ENCODE measurements at regions of chr10 and their contacts with region 1.

Region 1: GRCh38 chr10:73940634-73941221 is 29.8 kb downstream of the PLAU start:
- DNase-seq: peak; percentile 78 to 85 (median 79)
- H3K4me3 ChIP-seq: no peak overlapping the region
- H3K4me3 Mint-ChIP-seq: peak overlapping the region in 7 of 8 donors; percentile 49 to 79 (median 66)
- H3K27ac ChIP-seq: no peak overlapping the region
- H3K27ac Mint-ChIP-seq: peak overlapping the region in 5 of 7 donors; percentile 37 to 82 (median 74)
- H3K4me1 ChIP-seq: peaks cover 10% of the 10 kb centered on the region
- H3K4me1 Mint-ChIP-seq: peaks cover 6 to 9% (median 8%) of the 10 kb centered on the region in 4 donors
- H3K27me3 ChIP-seq: no peaks in the 10 kb centered on the region
- H3K27me3 Mint-ChIP-seq: peaks cover 0 to 2% of the 10 kb centered on the region in 2 donors

Region 2: DNA sequence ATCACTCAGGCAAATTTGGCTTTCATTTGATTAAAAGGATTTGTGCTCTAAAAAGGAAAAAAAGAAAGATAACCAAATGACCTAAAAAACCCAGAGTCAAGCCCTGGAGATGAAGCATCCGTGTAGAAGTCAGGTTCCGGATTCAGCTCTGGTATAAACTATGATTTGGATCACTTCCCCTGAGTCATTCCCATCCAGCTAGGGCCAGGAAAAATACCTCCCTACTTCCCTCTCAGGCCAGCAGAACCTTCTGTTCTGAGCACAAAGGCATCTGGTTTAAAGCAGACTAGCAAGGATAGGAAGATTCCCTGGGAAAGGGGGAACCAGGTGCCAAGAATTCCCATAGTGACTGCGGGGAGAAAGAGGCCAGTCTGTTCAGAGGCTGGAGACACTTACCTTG is 103.7 kb before region 1 on chr10:
- CTCF ChIA-PET with region 1: interaction called, 10 read pairs
- POLR2A ChIA-PET with region 1: no interaction called
- intact Hi-C with region 1: no loop called
- DNase-seq: no peak
- H3K4me3 ChIP-seq: no peak overlapping the region
- H3K4me3 Mint-ChIP-seq: no peak overlapping the region
- H3K27ac ChIP-seq: no peak overlapping the region
- H3K27ac Mint-ChIP-seq: peak overlapping the region in 3 of 7 donors; percentile 4 to 42 (median 42)
- H3K4me1 ChIP-seq: no peaks in the 10 kb centered on the region
- H3K4me1 Mint-ChIP-seq: no peaks in the 10 kb centered on the region
- H3K27me3 ChIP-seq: no peaks in the 10 kb centered on the region
- H3K27me3 Mint-ChIP-seq: no peaks in the 10 kb centered on the region

Region 3: GRCh38 chr10:73865459-73866442 is 75.0 kb before region 1 on chr10:
- CTCF ChIA-PET with region 1: interaction called, 12 read pairs
- POLR2A ChIA-PET with region 1: no interaction called
- intact Hi-C with region 1: no loop called
- DNase-seq: peak; percentile 31 to 61 (median 44)
- H3K4me3 ChIP-seq: peak overlapping the region; percentile 56 to 65
- H3K4me3 Mint-ChIP-seq: peak overlapping the region; percentile 84 to 93 (median 86)
- H3K27ac ChIP-seq: peak overlapping the region; percentile 64
- H3K27ac Mint-ChIP-seq: peak overlapping the region; percentile 88 to 98 (median 94)
- H3K4me1 ChIP-seq: peaks cover 87% of the 10 kb centered on the region
- H3K4me1 Mint-ChIP-seq: peaks cover 47 to 97% (median 81%) of the 10 kb centered on the region in 4 donors
- H3K27me3 ChIP-seq: no peaks in the 10 kb centered on the region
- H3K27me3 Mint-ChIP-seq: no peaks in the 10 kb centered on the region

Region 4: DNA sequence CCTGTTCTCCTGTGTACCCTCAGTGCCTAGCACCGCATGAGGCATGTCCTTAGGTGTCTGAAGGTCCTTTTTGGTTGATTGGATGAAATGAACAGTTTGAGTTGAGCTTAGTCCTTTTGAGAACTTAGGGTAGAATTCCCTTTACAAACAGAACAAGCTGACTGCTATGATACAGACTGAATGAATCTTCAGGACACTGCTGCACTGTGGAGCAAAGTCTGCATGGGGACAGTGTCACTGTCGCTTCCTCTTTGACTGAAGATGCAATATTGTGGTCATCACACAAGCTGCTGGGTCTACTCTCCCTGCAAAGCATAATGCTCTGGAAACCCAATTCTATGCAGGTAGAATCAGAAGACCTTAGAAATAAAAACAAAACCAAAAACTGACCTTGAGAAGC is 38.4 kb before region 1 on chr10:
- CTCF ChIA-PET with region 1: interaction called, 20 read pairs
- POLR2A ChIA-PET with region 1: no interaction called
- intact Hi-C with region 1: no loop called
- DNase-seq: no peak
- H3K4me3 ChIP-seq: no peak overlapping the region
- H3K4me3 Mint-ChIP-seq: no peak overlapping the region
- H3K27ac ChIP-seq: no peak overlapping the region
- H3K27ac Mint-ChIP-seq: no peak overlapping the region
- H3K4me1 ChIP-seq: no peaks in the 10 kb centered on the region
- H3K4me1 Mint-ChIP-seq: no peaks in the 10 kb centered on the region
- H3K27me3 ChIP-seq: no peaks in the 10 kb centered on the region
- H3K27me3 Mint-ChIP-seq: peaks cover 12 to 13% of the 10 kb centered on the region in 2 donors

Region 5: DNA sequence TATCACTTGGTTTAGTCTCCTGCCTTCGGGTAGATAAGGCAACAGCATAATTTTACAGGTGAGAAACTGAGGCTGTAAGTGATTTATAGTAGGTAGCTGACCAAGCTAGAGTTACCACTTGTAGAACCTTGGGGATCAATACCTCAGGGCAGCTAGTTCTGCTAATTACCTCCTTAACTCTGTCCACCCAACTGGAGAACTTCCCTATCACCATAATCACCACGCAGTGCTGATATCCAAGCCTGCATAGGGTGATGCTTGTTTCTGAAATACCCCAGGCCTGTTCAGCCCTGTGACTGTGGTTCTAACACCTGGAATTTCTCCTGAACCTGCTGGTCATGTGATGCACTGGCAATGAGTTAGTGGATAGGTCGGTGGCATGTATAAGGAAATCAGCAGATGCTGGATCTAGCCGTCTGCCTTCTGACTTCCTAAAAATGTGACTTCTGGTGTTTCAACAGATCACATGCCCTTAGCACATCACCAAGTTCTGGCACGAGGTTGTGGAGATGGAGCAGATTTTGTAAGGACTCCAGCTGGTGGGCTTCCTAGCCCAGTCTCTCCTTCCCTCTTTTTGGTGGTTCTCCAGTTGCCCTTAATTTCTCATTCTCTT is 14.5 kb before region 1 on chr10:
- CTCF ChIA-PET with region 1: interaction called, 39 read pairs
- POLR2A ChIA-PET with region 1: no interaction called
- intact Hi-C with region 1: no loop called
- DNase-seq: no peak
- H3K4me3 ChIP-seq: no peak overlapping the region
- H3K4me3 Mint-ChIP-seq: no peak overlapping the region
- H3K27ac ChIP-seq: no peak overlapping the region
- H3K27ac Mint-ChIP-seq: no peak overlapping the region
- H3K4me1 ChIP-seq: peaks cover 19% of the 10 kb centered on the region
- H3K4me1 Mint-ChIP-seq: peaks cover 13 to 28% (median 15%) of the 10 kb centered on the region in 4 donors
- H3K27me3 ChIP-seq: no peaks in the 10 kb centered on the region
- H3K27me3 Mint-ChIP-seq: peaks cover 4 to 17% of the 10 kb centered on the region in 2 donors

Region 6: GRCh38 chr10:73991884-73992245 is 51.1 kb after region 1 on chr10:
- CTCF ChIA-PET with region 1: interaction called, 17 read pairs
- POLR2A ChIA-PET with region 1: no interaction called
- intact Hi-C with region 1: no loop called
- DNase-seq: peak; percentile 82 to 90 (median 88)
- H3K4me3 ChIP-seq: no peak overlapping the region
- H3K4me3 Mint-ChIP-seq: peak overlapping the region; percentile 36 to 89 (median 60)
- H3K27ac ChIP-seq: peak overlapping the region; percentile 7
- H3K27ac Mint-ChIP-seq: peak overlapping the region; percentile 70 to 97 (median 93)
- H3K4me1 ChIP-seq: peaks cover 34% of the 10 kb centered on the region
- H3K4me1 Mint-ChIP-seq: peaks cover 23 to 62% (median 43%) of the 10 kb centered on the region in 4 donors
- H3K27me3 ChIP-seq: no peaks in the 10 kb centered on the region
- H3K27me3 Mint-ChIP-seq: no peaks in the 10 kb centered on the region

Region 7: GRCh38 chr10:74081192-74081803 is 140.6 kb after region 1 on chr10:
- CTCF ChIA-PET with region 1: interaction called, 77 read pairs
- POLR2A ChIA-PET with region 1: no interaction called
- intact Hi-C with region 1: loop called (anchors 1 kb)
- DNase-seq: peak in 4 of 5 donors; percentile 45 to 55 (median 49)
- H3K4me3 ChIP-seq: no peak overlapping the region
- H3K4me3 Mint-ChIP-seq: peak overlapping the region in 1 of 8 donors; percentile 1
- H3K27ac ChIP-seq: no peak overlapping the region
- H3K27ac Mint-ChIP-seq: peak overlapping the region in 6 of 7 donors; percentile 1 to 76 (median 25)
- H3K4me1 ChIP-seq: peaks cover 17% of the 10 kb centered on the region
- H3K4me1 Mint-ChIP-seq: peaks cover 22 to 48% (median 35%) of the 10 kb centered on the region in 4 donors
- H3K27me3 ChIP-seq: no peaks in the 10 kb centered on the region
- H3K27me3 Mint-ChIP-seq: no peaks in the 10 kb centered on the region